HCT116 (cell line): ENCODE measurements at regions of chrX and their contacts with region 1.

Region 1: GRCh38 chrX:103845165-103845653 is 13.2 kb upstream of the RAB9B start:
- DNase-seq: peak; percentile 38
- ATAC-seq: peak; percentile 90
- H3K4me3 ChIP-seq: no peak overlapping the region
- H3K27ac ChIP-seq: no peak overlapping the region
- H3K4me1 ChIP-seq: no peaks in the 10 kb centered on the region
- H3K27me3 ChIP-seq: peaks cover 5% of the 10 kb centered on the region; the same call in 1 of the 2 replicates
- CTCF ChIP-seq: peak; percentile 49 to 68 (median 51); a peak in 5 of 6 replicates
- POLR2A ChIP-seq: no peak
- RAD21 ChIP-seq: peak; percentile 67

Region 2: GRCh38 chrX:103656632-103657031 is 188.6 kb before region 1 on chrX:
- CTCF ChIA-PET with region 1: no interaction called
- POLR2A ChIA-PET with region 1: no interaction called
- RAD21 ChIA-PET with region 1: no interaction called
- intact Hi-C with region 1: no loop called
- DNase-seq: peak; percentile 60
- ATAC-seq: peak; percentile 91
- H3K4me3 ChIP-seq: no peak overlapping the region
- H3K27ac ChIP-seq: peak overlapping the region; percentile 44; the same call in 1 of the 2 replicates
- H3K4me1 ChIP-seq: peaks cover 11 to 27% of the 10 kb centered on the region in 2 experiments
- H3K27me3 ChIP-seq: no peaks in the 10 kb centered on the region
- CTCF ChIP-seq: no peak
- POLR2A ChIP-seq: no peak
- RAD21 ChIP-seq: no peak; the same call in 1 of the 2 replicates

Region 3: DNA sequence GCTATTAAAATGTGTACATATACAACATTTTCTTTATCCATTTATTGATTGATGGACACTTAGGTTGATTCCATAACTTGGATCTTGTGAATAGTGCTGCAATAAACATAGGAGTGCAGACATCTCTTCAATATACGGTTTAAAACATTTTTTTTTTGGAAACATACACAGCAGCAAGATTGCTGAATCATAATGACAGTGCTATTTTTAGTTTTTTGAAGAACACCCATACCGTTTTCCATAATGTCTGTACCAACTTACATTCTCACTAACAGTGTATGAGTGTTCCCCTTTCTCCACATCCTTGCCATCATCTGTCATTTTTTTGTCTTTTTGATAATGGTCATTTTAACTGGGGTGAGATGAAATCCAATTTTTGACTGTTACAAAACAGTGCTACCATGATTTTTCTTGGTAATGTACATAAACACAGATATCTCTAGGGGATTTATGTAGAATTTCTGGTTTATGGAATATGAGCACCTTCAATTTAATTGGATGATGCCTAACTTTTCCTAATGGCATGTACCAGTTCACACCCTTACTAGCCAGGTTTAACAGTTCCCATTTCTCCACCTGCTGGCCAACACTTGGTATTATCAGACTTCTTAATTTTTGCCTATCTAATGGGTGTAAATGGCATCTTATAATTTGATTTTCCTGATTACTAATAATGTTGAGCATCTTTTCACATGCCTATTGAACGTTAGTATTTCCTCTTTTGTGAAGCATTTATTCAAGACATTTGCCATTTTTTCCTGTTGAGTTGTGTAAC is 96.2 kb after region 1 on chrX:
- CTCF ChIA-PET with region 1: interaction called, 25 read pairs
- POLR2A ChIA-PET with region 1: no interaction called
- RAD21 ChIA-PET with region 1: no interaction called
- intact Hi-C with region 1: loop called (anchors 1 kb)
- DNase-seq: no peak
- ATAC-seq: peak; percentile 60; the same call in 1 of the 2 replicates
- H3K4me3 ChIP-seq: no peak overlapping the region
- H3K27ac ChIP-seq: no peak overlapping the region
- H3K4me1 ChIP-seq: no peaks in the 10 kb centered on the region
- H3K27me3 ChIP-seq: no peaks in the 10 kb centered on the region
- CTCF ChIP-seq: peak; percentile 26 to 45 (median 41); a peak in 4 of 6 replicates
- POLR2A ChIP-seq: no peak
- RAD21 ChIP-seq: peak; percentile 45

Region 4: GRCh38 chrX:104136241-104137019 is 291.2 kb after region 1 on chrX:
- CTCF ChIA-PET with region 1: interaction called, 9 read pairs
- POLR2A ChIA-PET with region 1: no interaction called
- RAD21 ChIA-PET with region 1: no interaction called
- intact Hi-C with region 1: loop called (anchors 2 kb)
- DNase-seq: peak; percentile 63
- ATAC-seq: peak; percentile 95
- H3K4me3 ChIP-seq: peak overlapping the region; percentile 19 to 34; a peak in 3 of 4 replicates
- H3K27ac ChIP-seq: no peak overlapping the region
- H3K4me1 ChIP-seq: 0 out of 4 replicates have a peak, but pooled peaks cover 0 to 2% of the 10 kb centered on the region in 2 experiments
- H3K27me3 ChIP-seq: no peaks in the 10 kb centered on the region
- CTCF ChIP-seq: peak; percentile 49 to 56 (median 54); a peak in 5 of 6 replicates
- POLR2A ChIP-seq: no peak
- RAD21 ChIP-seq: peak; percentile 69

Region 5: GRCh38 chrX:104270920-104271512 is 425.8 kb after region 1 on chrX:
- CTCF ChIA-PET with region 1: interaction called, 6 read pairs
- POLR2A ChIA-PET with region 1: no interaction called
- RAD21 ChIA-PET with region 1: no interaction called
- intact Hi-C with region 1: loop called (anchors 1 kb)
- DNase-seq: peak; percentile 50
- ATAC-seq: peak; percentile 97
- H3K4me3 ChIP-seq: no peak overlapping the region
- H3K27ac ChIP-seq: no peak overlapping the region
- H3K4me1 ChIP-seq: no peaks in the 10 kb centered on the region
- H3K27me3 ChIP-seq: no peaks in the 10 kb centered on the region
- CTCF ChIP-seq: peak; percentile 55 to 80 (median 63); a peak in 5 of 6 replicates
- POLR2A ChIP-seq: no peak
- RAD21 ChIP-seq: peak; percentile 75